ENCODE measurements at regions of chr16 and their contacts with region 1.

Region 1: DNA sequence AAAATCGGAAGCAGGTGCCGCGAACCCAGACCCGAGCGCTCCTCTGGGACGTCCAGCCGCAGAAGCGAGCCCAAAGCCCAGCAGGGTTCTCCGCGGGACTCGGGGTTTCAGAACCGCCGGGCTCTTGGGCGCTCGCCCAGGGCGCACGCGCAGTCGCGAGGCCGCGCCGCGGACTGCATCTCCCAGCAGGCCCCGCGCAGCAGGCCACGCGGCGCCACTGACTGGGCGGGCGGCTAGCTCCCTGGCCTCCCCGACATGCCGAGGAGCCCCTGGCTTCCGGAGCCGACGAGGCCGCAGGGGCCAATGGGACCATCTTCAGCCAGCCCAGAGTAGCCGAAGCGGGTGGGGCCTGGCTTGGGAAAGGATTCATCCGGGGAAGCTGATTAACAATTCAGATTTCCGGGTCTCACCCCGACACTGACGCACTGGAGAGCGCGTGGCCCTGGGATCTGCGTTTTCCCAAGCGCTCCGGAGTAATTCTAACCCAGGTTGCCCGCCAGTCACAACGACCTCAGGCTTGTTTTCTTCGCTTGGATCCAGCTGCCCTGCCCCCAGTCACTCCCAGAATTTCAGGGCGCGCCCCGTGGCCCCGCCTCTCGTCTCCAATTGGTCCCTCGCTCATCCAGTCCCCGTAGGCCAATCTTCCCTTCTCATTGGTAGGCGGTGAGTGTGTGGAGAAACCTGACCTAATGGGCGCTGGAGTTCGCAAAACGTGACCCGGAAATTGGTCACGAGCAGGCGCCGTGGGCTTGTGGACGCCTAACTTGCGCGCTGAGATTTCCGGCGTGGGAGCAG is at the start of gene ZNF263:
- DNase-seq: peak; percentile 91 to 97 (median 95)
- ATAC-seq: peak; percentile 94
- H3K4me3 ChIP-seq: peak within 1 kb of the TSS; percentile 83
- H3K4me3 Mint-ChIP-seq: peak within 1 kb of the TSS; percentile 93 to 98 (median 96)
- H3K27ac ChIP-seq: peak within 1 kb of the TSS; percentile 92
- H3K27ac Mint-ChIP-seq: peak within 1 kb of the TSS; percentile 96 to 99 (median 98)
- H3K4me1 ChIP-seq: peaks cover 18 to 26% of the 10 kb centered on the region in 2 donors
- H3K4me1 Mint-ChIP-seq: peaks cover 21 to 48% (median 40%) of the 10 kb centered on the region in 7 donors
- H3K27me3 ChIP-seq: no peaks in the 10 kb centered on the region
- H3K27me3 Mint-ChIP-seq: peaks cover 0 to 3% (median 0%) of the 10 kb centered on the region in 5 donors
- total RNA-seq, gene ZNF263: 26.1 to 51.6 (median 36.9) TPM

Region 2: GRCh38 chr16:2531767-2532493 is 751.0 kb before region 1 on chr16:
- CTCF ChIA-PET with region 1: no interaction called
- POLR2A ChIA-PET with region 1: no interaction called
- intact Hi-C with region 1: loop called in 1 of 2 experiments (anchors 10 kb)
- DNase-seq: peak; percentile 94 to 97 (median 96)
- ATAC-seq: peak; percentile 93
- H3K4me3 ChIP-seq: peak overlapping the region; percentile 71
- H3K4me3 Mint-ChIP-seq: peak overlapping the region; percentile 84 to 100 (median 96)
- H3K27ac ChIP-seq: peak overlapping the region; percentile 93
- H3K27ac Mint-ChIP-seq: peak overlapping the region; percentile 96 to 100 (median 98)
- H3K4me1 ChIP-seq: peaks cover 5 to 7% of the 10 kb centered on the region in 2 donors
- H3K4me1 Mint-ChIP-seq: peaks cover 0 to 31% (median 20%) of the 10 kb centered on the region in 7 donors
- H3K27me3 ChIP-seq: no peaks in the 10 kb centered on the region
- H3K27me3 Mint-ChIP-seq: no peaks in the 10 kb centered on the region

Region 3: GRCh38 chr16:3158471-3159314 is 124.2 kb before region 1 on chr16:
- CTCF ChIA-PET with region 1: no interaction called
- POLR2A ChIA-PET with region 1: interaction called, 6 read pairs
- intact Hi-C with region 1: loop called in 1 of 2 experiments (anchors 1 kb)
- DNase-seq: peak; percentile 80 to 98 (median 91)
- ATAC-seq: peak; percentile 97
- H3K4me3 ChIP-seq: peak overlapping the region; percentile 86
- H3K4me3 Mint-ChIP-seq: peak overlapping the region; percentile 87 to 94 (median 92)
- H3K27ac ChIP-seq: peak overlapping the region; percentile 86
- H3K27ac Mint-ChIP-seq: peak overlapping the region; percentile 90 to 99 (median 95)
- H3K4me1 ChIP-seq: peaks cover 5 to 9% of the 10 kb centered on the region in 2 donors
- H3K4me1 Mint-ChIP-seq: peaks cover 10 to 42% (median 28%) of the 10 kb centered on the region in 7 donors
- H3K27me3 ChIP-seq: no peaks in the 10 kb centered on the region
- H3K27me3 Mint-ChIP-seq: peaks cover 0 to 26% (median 0%) of the 10 kb centered on the region in 5 donors

Region 4: GRCh38 chr16:3234543-3235541 is 48.1 kb before region 1 on chr16 and contains the start of gene ZNF200:
- CTCF ChIA-PET with region 1: no interaction called
- POLR2A ChIA-PET with region 1: interaction called, 13 read pairs
- intact Hi-C with region 1: loop called (anchors 1 kb)
- DNase-seq: peak; percentile 85 to 96 (median 94)
- ATAC-seq: peak; percentile 94
- H3K4me3 ChIP-seq: peak within 1 kb of the TSS; percentile 98
- H3K4me3 Mint-ChIP-seq: peak within 1 kb of the TSS; percentile 88 to 97 (median 94)
- H3K27ac ChIP-seq: peak within 1 kb of the TSS; percentile 90
- H3K27ac Mint-ChIP-seq: peak within 1 kb of the TSS; percentile 93 to 98 (median 97)
- H3K4me1 ChIP-seq: peaks cover 18 to 23% of the 10 kb centered on the region in 2 donors
- H3K4me1 Mint-ChIP-seq: peaks cover 20 to 48% (median 39%) of the 10 kb centered on the region in 7 donors
- H3K27me3 ChIP-seq: no peaks in the 10 kb centered on the region
- H3K27me3 Mint-ChIP-seq: peaks cover 0 to 3% (median 0%) of the 10 kb centered on the region in 5 donors
- total RNA-seq, gene ZNF200: 4.8 to 33.3 (median 16.6) TPM

Region 5: DNA sequence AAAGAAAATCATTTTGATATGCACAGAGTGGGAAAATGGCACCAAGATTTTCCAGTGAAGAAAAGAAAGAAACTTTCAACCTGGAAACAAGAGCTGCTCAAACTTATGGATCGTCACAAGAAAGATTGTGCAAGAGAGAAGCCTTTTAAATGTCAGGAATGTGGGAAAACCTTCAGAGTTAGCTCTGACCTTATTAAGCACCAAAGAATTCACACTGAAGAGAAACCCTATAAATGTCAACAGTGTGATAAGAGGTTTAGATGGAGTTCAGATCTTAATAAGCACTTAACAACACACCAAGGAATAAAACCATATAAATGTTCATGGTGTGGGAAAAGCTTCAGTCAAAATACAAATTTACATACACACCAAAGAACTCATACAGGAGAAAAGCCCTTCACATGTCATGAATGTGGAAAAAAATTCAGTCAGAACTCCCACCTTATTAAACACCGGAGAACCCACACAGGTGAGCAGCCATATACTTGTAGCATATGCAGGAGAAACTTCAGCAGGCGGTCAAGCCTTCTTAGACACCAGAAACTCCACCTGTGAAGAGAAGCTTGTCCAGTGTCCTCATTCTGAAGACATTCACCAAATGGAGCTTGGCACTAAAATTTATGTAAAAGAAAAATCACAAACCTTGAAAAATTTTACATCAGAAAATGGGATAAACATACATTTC is 34.5 kb after region 1 on chr16:
- CTCF ChIA-PET with region 1: interaction called, 3 read pairs
- POLR2A ChIA-PET with region 1: interaction called, 5 read pairs
- intact Hi-C with region 1: loop called in 1 of 2 experiments (anchors 5 kb)
- DNase-seq: peak in 1 of 9 donors; percentile 5
- ATAC-seq: no peak
- H3K4me3 ChIP-seq: peak overlapping the region; percentile 5
- H3K4me3 Mint-ChIP-seq: no peak overlapping the region
- H3K27ac ChIP-seq: no peak overlapping the region
- H3K27ac Mint-ChIP-seq: no peak overlapping the region
- H3K4me1 ChIP-seq: no peaks in the 10 kb centered on the region
- H3K4me1 Mint-ChIP-seq: peaks cover 0 to 4% (median 0%) of the 10 kb centered on the region in 7 donors
- H3K27me3 ChIP-seq: no peaks in the 10 kb centered on the region
- H3K27me3 Mint-ChIP-seq: no peaks in the 10 kb centered on the region

Region 6: DNA sequence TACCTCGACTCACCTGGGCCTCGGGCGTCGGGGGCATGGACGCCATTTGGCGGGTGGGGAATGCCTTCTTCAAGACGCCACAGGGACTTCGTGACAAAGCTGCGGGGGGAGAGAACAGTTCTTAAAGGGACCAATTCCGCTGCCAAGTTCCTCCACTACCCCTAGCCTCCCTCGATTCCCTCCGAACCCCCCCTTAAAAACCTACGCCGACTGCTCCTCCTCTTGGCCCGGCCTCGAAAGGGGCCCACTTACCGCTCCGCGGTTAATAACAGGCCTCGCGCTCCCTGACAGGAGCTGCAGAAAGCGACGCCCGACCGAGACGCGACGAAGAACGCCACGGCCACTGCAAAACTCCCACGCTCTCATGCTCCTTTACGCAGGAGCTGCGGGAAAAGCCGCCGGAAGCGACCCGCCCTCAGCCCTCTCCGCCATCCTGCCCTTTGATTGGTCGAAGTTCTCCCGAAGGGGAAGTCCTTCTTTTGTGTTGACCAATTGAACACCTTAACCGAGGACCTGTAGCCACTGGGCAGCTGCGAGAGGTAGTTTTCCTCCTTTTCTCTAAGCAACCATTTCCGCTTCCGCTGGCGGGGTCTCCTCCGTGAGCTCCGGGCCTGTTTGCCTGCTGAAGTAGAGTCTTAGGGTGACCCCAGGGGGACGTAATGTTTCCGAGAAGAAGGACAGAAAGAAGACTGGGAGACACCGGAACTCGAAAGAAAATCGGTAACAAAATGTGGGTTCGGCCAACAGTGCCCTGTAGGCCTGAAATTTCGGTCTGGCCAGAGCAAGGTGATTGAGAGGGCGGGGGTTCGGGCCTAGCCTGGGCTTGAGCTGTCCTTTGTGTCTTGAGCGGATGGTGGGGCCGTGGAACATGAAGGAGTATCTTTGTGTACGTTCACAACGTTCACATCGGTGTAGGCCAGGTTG is 160.4 kb after region 1 on chr16 and contains the starts of genes NAA60 and ZNF597:
- CTCF ChIA-PET with region 1: interaction called, 3 read pairs
- POLR2A ChIA-PET with region 1: interaction called, 4 read pairs
- intact Hi-C with region 1: loop called (anchors 1 to 5 kb)
- DNase-seq: peak; percentile 38 to 86 (median 79)
- ATAC-seq: peak; percentile 96
- H3K4me3 ChIP-seq: peak within 1 kb of the TSS; percentile 47
- H3K4me3 Mint-ChIP-seq: peak within 1 kb of the TSS; percentile 88 to 100 (median 96)
- H3K27ac ChIP-seq: peak within 1 kb of the TSS; percentile 89
- H3K27ac Mint-ChIP-seq: peak within 1 kb of the TSS; percentile 82 to 98 (median 96)
- H3K4me1 ChIP-seq: peaks cover 5 to 15% of the 10 kb centered on the region in 2 donors
- H3K4me1 Mint-ChIP-seq: peaks cover 0 to 46% (median 24%) of the 10 kb centered on the region in 7 donors
- H3K27me3 ChIP-seq: no peaks in the 10 kb centered on the region
- H3K27me3 Mint-ChIP-seq: peaks cover 0 to 5% (median 0%) of the 10 kb centered on the region in 5 donors
- total RNA-seq, gene NAA60: 38.7 to 63.7 (median 55.3) TPM
- total RNA-seq, gene ZNF597: 2.2 to 5.9 (median 3.8) TPM

Region 7: GRCh38 chr16:3712861-3713372 is 430.0 kb after region 1 on chr16:
- CTCF ChIA-PET with region 1: no interaction called
- POLR2A ChIA-PET with region 1: no interaction called
- intact Hi-C with region 1: no loop called
- DNase-seq: no peak
- ATAC-seq: no peak
- H3K4me3 ChIP-seq: no peak overlapping the region
- H3K4me3 Mint-ChIP-seq: peak overlapping the region in 4 of 10 donors; percentile 10 to 69 (median 31)
- H3K27ac ChIP-seq: no peak overlapping the region
- H3K27ac Mint-ChIP-seq: peak overlapping the region in 1 of 9 donors; percentile 70
- H3K4me1 ChIP-seq: peaks cover 3 to 9% of the 10 kb centered on the region in 2 donors
- H3K4me1 Mint-ChIP-seq: peaks cover 15 to 56% (median 40%) of the 10 kb centered on the region in 7 donors
- H3K27me3 ChIP-seq: no peaks in the 10 kb centered on the region
- H3K27me3 Mint-ChIP-seq: no peaks in the 10 kb centered on the region